Activated CD4-positive, alpha-beta T cell treated with anti-CD3 and anti-CD28 coated beads for 36 hours (primary cell): ENCODE measurements at regions of chr4 and their contacts with region 1.

Region 1: DNA sequence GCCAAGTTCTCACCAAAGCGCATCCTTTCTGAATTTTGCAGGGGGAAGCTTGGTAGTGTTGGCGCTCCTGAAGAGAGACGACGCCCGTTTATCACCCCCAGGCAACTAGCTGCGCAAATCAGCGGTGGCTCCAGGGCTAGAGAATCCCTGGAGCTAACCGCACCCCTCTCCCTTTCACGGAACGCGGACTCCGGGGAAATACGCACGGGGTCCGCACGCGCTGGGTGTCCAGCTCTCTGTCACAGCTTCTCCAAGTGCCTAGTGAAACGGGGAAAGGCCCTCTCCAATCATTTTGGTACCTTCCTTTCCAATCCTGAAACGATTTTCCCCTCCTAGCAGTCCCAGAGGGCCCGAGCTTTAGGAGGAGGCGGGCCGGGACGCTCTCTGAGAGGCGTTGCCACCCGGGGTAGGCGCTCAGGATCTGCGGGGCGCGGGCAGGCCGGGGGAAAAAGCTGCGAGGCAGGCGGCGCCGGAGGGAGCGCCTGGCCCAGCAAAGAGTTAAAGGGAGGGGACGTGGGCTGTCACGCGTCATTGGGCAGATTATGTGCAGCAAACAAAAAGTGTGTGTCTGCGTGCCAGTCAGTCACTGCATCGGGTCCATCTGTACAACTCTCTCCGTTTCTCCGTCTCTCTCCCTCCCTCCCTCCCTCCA is at the start of gene PRDM8:
- DNase-seq: peak; percentile 59
- ATAC-seq: peak; percentile 51
- H3K4me3 Mint-ChIP-seq: peak within 1 kb of the TSS; percentile 64
- H3K27ac Mint-ChIP-seq: no peak within 1 kb of the TSS
- H3K4me1 Mint-ChIP-seq: peaks cover 30% of the 10 kb centered on the region
- H3K27me3 Mint-ChIP-seq: peaks cover 33% of the 10 kb centered on the region
- total RNA-seq, gene PRDM8: 1.4 to 1.6 TPM

Region 2: DNA sequence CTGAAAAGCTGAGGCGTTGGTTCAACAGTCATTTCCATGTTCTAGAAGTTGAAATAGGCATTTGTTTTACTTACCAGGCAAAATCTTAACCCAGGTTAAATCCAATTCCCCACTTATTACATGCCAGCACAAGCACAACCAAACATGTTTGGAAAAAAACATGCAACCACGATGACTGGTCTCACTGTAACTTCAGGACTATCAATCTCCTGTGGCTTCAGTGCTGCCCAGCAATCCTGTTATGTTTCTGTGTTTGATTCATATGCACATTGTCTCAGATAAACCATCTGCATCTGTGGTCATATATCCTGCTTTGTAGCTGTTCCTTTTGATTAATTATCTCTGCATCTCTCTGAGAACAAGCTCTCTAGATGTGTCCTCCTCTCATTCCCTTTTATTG is 28.5 kb after region 1 on chr4:
- CTCF ChIA-PET with region 1: no interaction called
- POLR2A ChIA-PET with region 1: no interaction called
- intact Hi-C with region 1: no loop called
- DNase-seq: no peak
- ATAC-seq: no peak
- H3K4me3 Mint-ChIP-seq: no peak overlapping the region
- H3K27ac Mint-ChIP-seq: no peak overlapping the region
- H3K4me1 Mint-ChIP-seq: no peaks in the 10 kb centered on the region
- H3K27me3 Mint-ChIP-seq: peaks cover 11% of the 10 kb centered on the region

Region 3: GRCh38 chr4:80266253-80266901 is 69.3 kb after region 1 on chr4 and contains the start of gene FGF5:
- CTCF ChIA-PET with region 1: no interaction called
- POLR2A ChIA-PET with region 1: no interaction called
- intact Hi-C with region 1: loop called in 1 of 2 experiments (anchors 2 kb)
- DNase-seq: peak; percentile 61
- ATAC-seq: peak; percentile 60
- H3K4me3 Mint-ChIP-seq: peak within 1 kb of the TSS; percentile 61
- H3K27ac Mint-ChIP-seq: no peak within 1 kb of the TSS
- H3K4me1 Mint-ChIP-seq: peaks cover 25% of the 10 kb centered on the region
- H3K27me3 Mint-ChIP-seq: peaks cover 68% of the 10 kb centered on the region
- total RNA-seq, gene FGF5: not detected